ENCODE measurements at regions of chr4 and their contacts with region 1.

Region 1: GRCh38 chr4:120049732-120050494 is 16.7 kb downstream of the MAD2L1 start:
- DNase-seq: peak; percentile 54 to 91 (median 87)
- H3K4me3 ChIP-seq: peak overlapping the region in 1 of 3 donors; percentile 35
- H3K27ac ChIP-seq: no peak overlapping the region
- H3K4me1 ChIP-seq: no peaks in the 10 kb centered on the region
- H3K27me3 ChIP-seq: no peaks in the 10 kb centered on the region
- CTCF ChIP-seq: peak; percentile 96

Region 2: GRCh38 chr4:119314356-119314755 is 735.6 kb before region 1 on chr4:
- intact Hi-C with region 1: loop called (anchors 10 kb)
- DNase-seq: peak in 3 of 5 donors; percentile 35 to 80 (median 70)
- H3K4me3 ChIP-seq: no peak overlapping the region
- H3K27ac ChIP-seq: no peak overlapping the region
- H3K4me1 ChIP-seq: no peaks in the 10 kb centered on the region
- H3K27me3 ChIP-seq: no peaks in the 10 kb centered on the region
- CTCF ChIP-seq: peak; percentile 57

Region 3: DNA sequence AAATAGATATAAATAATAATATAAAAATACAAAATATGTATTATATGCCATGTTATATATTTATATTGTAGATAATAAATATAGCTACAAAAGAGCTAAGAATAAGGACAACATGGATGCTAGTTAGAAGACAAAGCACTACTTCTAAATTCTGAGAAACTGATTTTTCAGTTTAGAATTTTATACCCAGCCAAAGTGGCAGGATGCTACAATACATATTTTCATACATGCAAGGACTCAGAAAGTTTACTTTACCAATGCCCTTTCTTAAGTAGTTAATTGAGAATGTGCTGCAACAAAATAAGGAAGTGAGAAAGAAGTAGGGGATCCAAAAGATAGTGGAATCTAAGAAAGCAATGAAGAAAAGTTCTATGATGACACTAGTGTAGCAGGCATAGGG is 485.8 kb before region 1 on chr4:
- intact Hi-C with region 1: loop called (anchors 5 kb)
- DNase-seq: no peak
- H3K4me3 ChIP-seq: no peak overlapping the region
- H3K27ac ChIP-seq: no peak overlapping the region
- H3K4me1 ChIP-seq: no peaks in the 10 kb centered on the region
- H3K27me3 ChIP-seq: no peaks in the 10 kb centered on the region
- CTCF ChIP-seq: no peak

Region 4: DNA sequence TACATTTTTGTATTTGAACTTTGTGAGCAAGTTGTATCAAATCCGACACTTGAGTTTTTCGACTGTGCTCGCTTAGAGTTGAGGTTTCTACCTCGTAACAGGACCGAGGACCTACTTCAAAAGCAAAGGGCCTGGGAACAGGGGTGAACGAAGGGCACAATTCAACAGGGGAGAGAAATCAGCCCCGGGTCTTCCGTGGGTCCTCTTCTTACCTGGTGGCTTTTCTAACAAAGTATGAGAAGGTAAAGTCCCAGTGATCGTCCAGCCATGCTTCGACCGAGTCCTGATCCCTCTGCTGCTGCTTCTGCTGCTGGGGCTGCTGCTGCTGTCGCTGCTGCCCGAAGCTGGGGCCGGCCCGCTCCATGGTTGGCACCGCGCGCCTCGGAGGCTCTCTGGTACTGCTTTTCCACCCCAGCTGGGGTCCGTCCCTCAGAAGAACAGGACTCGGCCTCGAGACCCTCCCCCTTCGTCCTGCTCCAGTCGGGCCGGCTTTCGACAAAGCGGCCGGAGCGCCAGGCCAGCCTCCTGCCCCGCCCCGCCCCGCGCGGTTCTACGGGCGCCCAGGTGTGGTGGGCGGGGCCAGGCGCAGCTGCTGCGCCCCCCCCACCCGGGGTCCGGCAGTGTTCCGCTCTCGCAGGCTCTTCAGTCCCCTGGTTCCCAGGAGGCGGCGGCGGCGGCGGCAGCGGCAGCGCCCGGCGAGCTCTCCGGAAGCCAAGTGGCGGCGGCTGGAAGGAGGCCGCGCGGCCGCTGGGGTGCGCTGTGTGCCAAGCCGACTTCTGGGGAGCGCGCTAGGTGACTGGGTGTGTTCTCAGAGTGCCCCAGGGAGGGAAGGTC is 421.4 kb before region 1 on chr4 and contains the start of gene PDE5A:
- intact Hi-C with region 1: loop called (anchors 5 kb)
- DNase-seq: peak; percentile 94 to 96 (median 95)
- H3K4me3 ChIP-seq: peak within 1 kb of the TSS; percentile 80 to 87 (median 86)
- H3K27ac ChIP-seq: peak within 1 kb of the TSS; percentile 74 to 81
- H3K4me1 ChIP-seq: peaks cover 0 to 5% (median 0%) of the 10 kb centered on the region in 3 donors
- H3K27me3 ChIP-seq: no peaks in the 10 kb centered on the region
- CTCF ChIP-seq: peak; percentile 82
- total RNA-seq, gene PDE5A: 29.4 TPM

Region 5: DNA sequence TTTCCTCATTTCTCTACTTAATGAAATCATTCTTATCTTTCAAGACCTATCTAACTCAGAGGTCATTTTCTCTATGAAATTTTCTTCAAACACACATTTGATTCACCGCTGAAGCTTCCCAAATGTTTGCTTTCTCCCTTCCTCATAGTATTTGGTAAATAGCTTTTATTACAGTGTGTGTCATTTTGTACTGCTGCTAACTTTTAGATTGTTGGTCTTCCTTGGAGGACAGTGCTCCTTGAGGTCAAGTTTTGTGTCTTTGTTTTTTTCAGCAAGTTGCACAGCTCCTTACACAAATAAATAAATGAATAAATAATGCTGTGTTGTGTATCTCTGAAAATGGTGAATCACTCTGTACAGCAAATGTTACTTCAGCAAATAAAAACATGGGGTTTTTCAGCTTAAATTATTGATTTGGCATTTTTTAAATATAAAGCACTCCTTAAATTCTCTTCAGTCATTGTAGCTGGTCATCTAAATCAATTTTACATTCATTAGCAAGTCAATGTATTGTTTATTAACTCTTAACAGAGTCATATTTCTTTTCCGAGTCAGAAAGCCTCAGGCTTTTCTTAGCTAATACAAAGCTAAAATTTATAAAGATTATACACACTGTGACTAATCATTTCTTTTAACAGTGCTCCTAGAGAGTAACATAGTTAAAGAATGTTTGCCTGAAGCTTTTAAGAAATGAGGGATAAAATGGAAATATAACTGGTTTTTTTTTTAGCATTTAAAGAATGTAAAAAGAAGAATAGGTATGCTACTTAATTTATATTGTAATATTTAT is 46.8 kb after region 1 on chr4:
- intact Hi-C with region 1: no loop called
- DNase-seq: no peak
- H3K4me3 ChIP-seq: no peak overlapping the region
- H3K27ac ChIP-seq: no peak overlapping the region
- H3K4me1 ChIP-seq: no peaks in the 10 kb centered on the region
- H3K27me3 ChIP-seq: no peaks in the 10 kb centered on the region
- CTCF ChIP-seq: no peak

Region 6: DNA sequence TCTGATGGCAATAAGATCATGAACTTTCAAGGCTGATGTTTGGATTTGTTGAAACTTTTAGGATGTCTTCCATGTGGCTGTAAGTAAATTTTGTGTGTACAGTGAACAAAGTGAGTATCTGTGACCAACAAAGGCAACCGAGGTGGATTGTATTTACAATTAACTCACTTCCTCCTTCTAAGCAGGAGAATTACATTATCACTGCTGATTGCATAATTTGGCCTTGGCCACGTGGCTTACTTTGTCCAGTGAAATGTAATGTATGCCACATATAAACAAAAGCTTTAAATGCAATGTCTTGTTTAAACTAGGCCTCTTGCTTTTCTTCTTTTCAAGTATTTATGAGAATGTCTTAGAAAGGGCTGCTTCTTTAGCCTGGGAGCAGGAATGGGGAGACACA is 83.0 kb after region 1 on chr4:
- intact Hi-C with region 1: no loop called
- DNase-seq: no peak
- H3K4me3 ChIP-seq: no peak overlapping the region
- H3K27ac ChIP-seq: no peak overlapping the region
- H3K4me1 ChIP-seq: no peaks in the 10 kb centered on the region
- H3K27me3 ChIP-seq: no peaks in the 10 kb centered on the region
- CTCF ChIP-seq: no peak

Region 7: DNA sequence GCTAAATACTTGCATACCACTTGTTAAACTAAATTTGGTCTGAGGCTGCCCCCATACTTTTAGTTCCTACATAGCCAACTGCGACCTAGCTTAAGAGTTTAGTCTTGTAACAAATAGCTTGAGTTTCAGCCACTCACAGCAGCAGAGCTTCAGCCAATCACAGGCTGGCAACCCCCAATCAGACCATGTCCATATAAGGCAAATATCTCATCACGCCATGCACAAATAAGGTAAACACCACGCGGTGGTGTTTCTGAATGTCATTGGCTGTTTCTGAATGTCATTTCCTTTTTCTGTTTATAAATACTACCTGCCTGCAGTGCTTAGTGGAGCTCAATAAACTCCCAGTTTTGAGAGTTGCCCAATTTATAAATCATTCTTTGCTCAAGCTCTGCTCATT is 159.8 kb after region 1 on chr4:
- intact Hi-C with region 1: no loop called
- DNase-seq: no peak
- H3K4me3 ChIP-seq: no peak overlapping the region
- H3K27ac ChIP-seq: no peak overlapping the region
- H3K4me1 ChIP-seq: no peaks in the 10 kb centered on the region
- H3K27me3 ChIP-seq: no peaks in the 10 kb centered on the region
- CTCF ChIP-seq: no peak